Esophagus muscularis mucosa (tissue), 4 donors: ENCODE measurements at regions of chr5 and their contacts with region 1.

Region 1: DNA sequence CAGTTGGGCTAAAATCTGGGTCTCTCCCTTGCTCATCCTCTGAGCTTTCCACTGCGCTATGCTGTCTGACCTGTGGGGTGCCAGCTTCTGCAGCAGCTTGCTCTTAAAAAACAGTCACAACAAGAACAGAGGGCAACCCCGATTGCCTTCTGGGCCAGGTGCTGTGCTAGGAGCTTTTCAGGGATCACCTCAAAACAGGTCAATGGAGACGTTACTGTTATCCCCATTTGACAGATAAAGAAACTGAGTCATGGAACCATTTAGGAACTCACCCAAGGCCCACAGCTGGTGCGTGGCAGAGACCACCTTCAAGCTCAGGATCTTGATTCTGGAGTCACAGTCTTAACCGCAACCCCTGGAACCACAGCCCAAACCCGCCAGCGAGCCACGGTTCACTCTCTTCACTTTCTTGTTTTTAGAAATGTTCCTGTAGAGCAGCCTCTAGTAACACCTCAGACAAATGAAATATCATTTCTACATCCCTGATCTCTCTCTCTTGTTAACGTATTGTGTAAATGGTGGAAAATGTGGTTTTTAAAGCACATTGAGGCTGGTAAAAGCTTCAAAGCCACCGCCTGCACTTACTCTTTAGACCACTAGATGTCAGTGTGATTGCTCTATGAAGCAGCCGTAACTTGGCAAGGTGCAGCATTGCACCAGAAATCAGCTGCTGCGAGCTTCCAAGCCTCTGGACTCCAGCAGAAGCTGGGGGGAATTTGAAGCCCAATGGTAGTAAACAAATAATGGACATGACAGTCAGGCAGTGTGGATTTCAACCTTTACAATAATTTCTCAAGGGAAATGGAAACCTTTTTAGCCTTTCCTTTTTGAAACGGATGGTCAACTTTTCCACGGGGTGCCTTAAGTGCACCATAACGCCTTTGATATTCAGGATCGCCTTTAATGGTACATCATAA is 1.7 kb downstream of the FYB1 start:
- DNase-seq: no peak
- H3K4me3 ChIP-seq: peak overlapping the region in 1 of 4 donors; percentile 4
- H3K27ac ChIP-seq: no peak overlapping the region
- H3K4me1 ChIP-seq: peaks cover 0 to 5% (median 2%) of the 10 kb centered on the region in 4 donors
- H3K27me3 ChIP-seq: no peaks in the 10 kb centered on the region
- CTCF ChIP-seq: peak; percentile 90 to 97 (median 93)
- EP300 ChIP-seq: no peak
- POLR2A ChIP-seq: no peak

Region 2: GRCh38 chr5:39283231-39283818 is 65.7 kb after region 1 on chr5:
- intact Hi-C with region 1: loop called (anchors 2 kb)
- DNase-seq: no peak
- H3K4me3 ChIP-seq: no peak overlapping the region
- H3K27ac ChIP-seq: no peak overlapping the region
- H3K4me1 ChIP-seq: no peaks in the 10 kb centered on the region
- H3K27me3 ChIP-seq: no peaks in the 10 kb centered on the region
- CTCF ChIP-seq: peak; percentile 38 to 55 (median 40)
- EP300 ChIP-seq: no peak
- POLR2A ChIP-seq: no peak

Region 3: GRCh38 chr5:39370555-39371366 is 153.1 kb after region 1 on chr5:
- intact Hi-C with region 1: loop called (anchors 5 kb)
- DNase-seq: no peak
- H3K4me3 ChIP-seq: no peak overlapping the region
- H3K27ac ChIP-seq: no peak overlapping the region
- H3K4me1 ChIP-seq: no peaks in the 10 kb centered on the region
- H3K27me3 ChIP-seq: no peaks in the 10 kb centered on the region
- CTCF ChIP-seq: no peak
- EP300 ChIP-seq: no peak
- POLR2A ChIP-seq: no peak

Region 4: GRCh38 chr5:39570403-39571027 is 352.9 kb after region 1 on chr5:
- intact Hi-C with region 1: loop called (anchors 1 kb)
- DNase-seq: no peak
- H3K4me3 ChIP-seq: no peak overlapping the region
- H3K27ac ChIP-seq: no peak overlapping the region
- H3K4me1 ChIP-seq: peaks cover 0 to 4% (median 0%) of the 10 kb centered on the region in 4 donors
- H3K27me3 ChIP-seq: no peaks in the 10 kb centered on the region
- CTCF ChIP-seq: peak; percentile 68 to 79 (median 73)
- EP300 ChIP-seq: no peak
- POLR2A ChIP-seq: no peak